Activated CD8-positive, alpha-beta T cell treated with anti-CD3 and anti-CD28 coated beads for 36 hours (primary cell): ENCODE measurements at regions of chr5 and their contacts with region 1.

Region 1: GRCh38 chr5:138594305-138595058 is 19.3 kb upstream of the HSPA9 start:
- DNase-seq: no peak
- ATAC-seq: no peak
- H3K4me3 Mint-ChIP-seq: no peak overlapping the region
- H3K27ac Mint-ChIP-seq: no peak overlapping the region
- H3K4me1 Mint-ChIP-seq: no peaks in the 10 kb centered on the region
- H3K27me3 Mint-ChIP-seq: peaks cover 26% of the 10 kb centered on the region
- CTCF ChIP-seq: peak; percentile 69

Region 2: GRCh38 chr5:138559937-138560336 is 34.5 kb before region 1 on chr5:
- CTCF ChIA-PET with region 1: no interaction called
- POLR2A ChIA-PET with region 1: no interaction called
- intact Hi-C with region 1: no loop called
- DNase-seq: no peak
- ATAC-seq: no peak
- H3K4me3 Mint-ChIP-seq: no peak overlapping the region
- H3K27ac Mint-ChIP-seq: peak overlapping the region; percentile 75
- H3K4me1 Mint-ChIP-seq: peaks cover 38% of the 10 kb centered on the region
- H3K27me3 Mint-ChIP-seq: no peaks in the 10 kb centered on the region
- CTCF ChIP-seq: no peak

Region 3: GRCh38 chr5:138583984-138584637 is 10.4 kb before region 1 on chr5:
- CTCF ChIA-PET with region 1: interaction called, 19 read pairs
- POLR2A ChIA-PET with region 1: interaction called, 6 read pairs
- intact Hi-C with region 1: no loop called
- DNase-seq: no peak
- ATAC-seq: no peak
- H3K4me3 Mint-ChIP-seq: no peak overlapping the region
- H3K27ac Mint-ChIP-seq: no peak overlapping the region
- H3K4me1 Mint-ChIP-seq: peaks cover 2% of the 10 kb centered on the region
- H3K27me3 Mint-ChIP-seq: peaks cover 1% of the 10 kb centered on the region
- CTCF ChIP-seq: no peak

Region 4: GRCh38 chr5:138605254-138605972 is 10.9 kb after region 1 on chr5:
- CTCF ChIA-PET with region 1: interaction called, 16 read pairs
- POLR2A ChIA-PET with region 1: no interaction called
- intact Hi-C with region 1: no loop called
- DNase-seq: no peak
- ATAC-seq: no peak
- H3K4me3 Mint-ChIP-seq: no peak overlapping the region
- H3K27ac Mint-ChIP-seq: no peak overlapping the region
- H3K4me1 Mint-ChIP-seq: peaks cover 21% of the 10 kb centered on the region
- H3K27me3 Mint-ChIP-seq: peaks cover 57% of the 10 kb centered on the region
- CTCF ChIP-seq: no peak